ENCODE measurements at regions of chr5 and their contacts with region 1.

Region 1: GRCh38 chr5:99060306-99061261 is 131.8 kb upstream of the CHD1 start:
- DNase-seq: peak; percentile 78 to 92 (median 87)
- ATAC-seq: peak; percentile 78
- H3K4me3 ChIP-seq: no peak overlapping the region
- H3K4me3 Mint-ChIP-seq: peak overlapping the region; percentile 23
- H3K27ac ChIP-seq: no peak overlapping the region
- H3K27ac Mint-ChIP-seq: no peak overlapping the region
- H3K4me1 ChIP-seq: no peaks in the 10 kb centered on the region
- H3K4me1 Mint-ChIP-seq: peaks cover 15% of the 10 kb centered on the region
- H3K27me3 ChIP-seq: no peaks in the 10 kb centered on the region
- H3K27me3 Mint-ChIP-seq: peaks cover 7% of the 10 kb centered on the region
- CTCF ChIP-seq: peak; percentile 92

Region 2: DNA sequence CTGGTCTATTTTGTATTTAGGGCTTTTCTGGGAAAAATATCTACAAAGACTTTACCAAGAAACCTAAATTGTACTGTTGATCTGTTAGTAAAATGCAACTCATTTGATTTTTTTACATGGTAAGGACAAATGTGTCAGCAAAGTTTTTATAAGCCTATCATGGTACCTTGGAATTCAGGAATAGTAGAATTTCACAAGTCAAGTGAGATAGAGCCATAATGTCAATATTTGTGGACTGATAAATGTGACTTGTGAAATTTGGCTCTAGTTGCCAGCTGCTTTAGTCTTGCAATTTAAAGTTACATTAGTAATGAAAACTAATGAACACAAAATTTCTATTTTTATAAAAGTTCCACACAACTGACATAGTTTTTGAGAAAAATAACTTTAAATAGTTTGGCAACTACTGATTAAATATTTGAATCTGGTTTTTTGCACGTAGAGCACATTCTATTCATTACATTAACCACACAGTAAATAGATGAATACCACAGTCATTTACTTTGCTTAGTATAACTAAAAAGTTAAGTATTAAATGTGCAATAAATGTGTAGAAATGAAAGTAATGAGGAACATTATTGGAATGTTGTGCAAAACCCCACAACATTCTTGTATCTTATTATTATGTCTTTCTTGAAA is 1836.4 kb before region 1 on chr5:
- CTCF ChIA-PET with region 1: no interaction called
- POLR2A ChIA-PET with region 1: no interaction called
- intact Hi-C with region 1: loop called in 1 of 2 experiments (anchors 10 kb)
- DNase-seq: no peak
- ATAC-seq: no peak
- H3K4me3 ChIP-seq: no peak overlapping the region
- H3K4me3 Mint-ChIP-seq: no peak overlapping the region
- H3K27ac ChIP-seq: no peak overlapping the region
- H3K27ac Mint-ChIP-seq: no peak overlapping the region
- H3K4me1 ChIP-seq: no peaks in the 10 kb centered on the region
- H3K4me1 Mint-ChIP-seq: no peaks in the 10 kb centered on the region
- H3K27me3 ChIP-seq: no peaks in the 10 kb centered on the region
- H3K27me3 Mint-ChIP-seq: no peaks in the 10 kb centered on the region
- CTCF ChIP-seq: no peak

Region 3: GRCh38 chr5:98773464-98774191 is 287.0 kb before region 1 on chr5 and contains the start of gene RGMB:
- CTCF ChIA-PET with region 1: no interaction called
- POLR2A ChIA-PET with region 1: no interaction called
- intact Hi-C with region 1: no loop called
- DNase-seq: peak; percentile 79 to 94 (median 88)
- ATAC-seq: peak; percentile 85
- H3K4me3 ChIP-seq: peak within 1 kb of the TSS; percentile 74
- H3K4me3 Mint-ChIP-seq: peak within 1 kb of the TSS; percentile 99
- H3K27ac ChIP-seq: peak within 1 kb of the TSS; percentile 10 to 61
- H3K27ac Mint-ChIP-seq: peak within 1 kb of the TSS; percentile 87
- H3K4me1 ChIP-seq: peaks cover 45% of the 10 kb centered on the region
- H3K4me1 Mint-ChIP-seq: peaks cover 72% of the 10 kb centered on the region
- H3K27me3 ChIP-seq: peaks cover 0 to 12% of the 10 kb centered on the region in 2 experiments
- H3K27me3 Mint-ChIP-seq: peaks cover 14% of the 10 kb centered on the region
- CTCF ChIP-seq: no peak
- total RNA-seq, gene RGMB: 15.8 to 15.9 TPM

Region 4: DNA sequence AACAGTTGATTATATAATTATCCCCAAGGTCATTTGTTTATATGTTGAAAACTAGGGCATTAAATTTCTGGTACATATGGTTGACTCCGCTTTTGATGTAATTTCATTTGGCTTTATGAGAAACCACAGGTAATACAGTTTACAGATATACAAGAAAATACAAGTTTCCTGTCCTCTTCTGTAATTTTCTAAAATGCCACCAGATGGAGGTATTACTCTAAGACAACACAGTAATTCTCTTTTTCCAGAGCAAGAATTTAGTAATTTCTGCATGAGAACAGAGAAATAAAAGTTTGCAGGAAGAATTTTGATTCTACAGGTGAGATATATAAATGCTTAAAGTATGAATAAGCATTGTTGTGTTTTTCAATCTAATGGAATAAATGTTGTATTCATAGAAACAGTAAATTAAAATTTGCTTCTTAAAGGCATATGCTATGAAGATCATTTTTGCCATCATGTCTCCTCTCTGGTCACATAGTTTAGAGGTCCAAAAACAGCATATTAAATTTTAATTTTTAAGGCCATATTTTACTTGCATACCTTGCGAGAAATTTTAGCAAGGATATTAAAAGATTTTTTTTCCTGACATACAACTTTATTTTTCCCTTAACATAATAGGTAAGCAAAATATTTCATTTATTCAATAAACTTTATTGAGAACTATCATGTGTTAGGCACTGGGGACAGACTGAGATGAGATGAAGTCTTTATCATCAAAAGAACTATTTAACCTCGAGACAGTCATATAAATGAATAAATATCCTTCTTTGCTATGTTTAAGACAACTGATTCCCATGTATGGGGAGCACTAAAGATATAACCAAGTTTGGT is 154.5 kb before region 1 on chr5:
- CTCF ChIA-PET with region 1: interaction called, 29 read pairs
- POLR2A ChIA-PET with region 1: interaction called, 6 read pairs
- intact Hi-C with region 1: loop called (anchors 1 kb)
- DNase-seq: peak in 3 of 14 experiments; percentile 74 to 76 (median 75)
- ATAC-seq: peak; percentile 68
- H3K4me3 ChIP-seq: no peak overlapping the region
- H3K4me3 Mint-ChIP-seq: no peak overlapping the region
- H3K27ac ChIP-seq: no peak overlapping the region
- H3K27ac Mint-ChIP-seq: peak overlapping the region; percentile 13
- H3K4me1 ChIP-seq: peaks cover 2% of the 10 kb centered on the region
- H3K4me1 Mint-ChIP-seq: peaks cover 46% of the 10 kb centered on the region
- H3K27me3 ChIP-seq: no peaks in the 10 kb centered on the region
- H3K27me3 Mint-ChIP-seq: no peaks in the 10 kb centered on the region
- CTCF ChIP-seq: peak; percentile 88

Region 5: GRCh38 chr5:98975682-98976407 is 84.7 kb before region 1 on chr5:
- CTCF ChIA-PET with region 1: no interaction called
- POLR2A ChIA-PET with region 1: no interaction called
- intact Hi-C with region 1: loop called in 1 of 2 experiments (anchors 5 kb)
- DNase-seq: peak in 1 of 14 experiments; percentile 14
- ATAC-seq: no peak
- H3K4me3 ChIP-seq: no peak overlapping the region
- H3K4me3 Mint-ChIP-seq: no peak overlapping the region
- H3K27ac ChIP-seq: no peak overlapping the region
- H3K27ac Mint-ChIP-seq: no peak overlapping the region
- H3K4me1 ChIP-seq: peaks cover 7% of the 10 kb centered on the region
- H3K4me1 Mint-ChIP-seq: peaks cover 26% of the 10 kb centered on the region
- H3K27me3 ChIP-seq: no peaks in the 10 kb centered on the region
- H3K27me3 Mint-ChIP-seq: no peaks in the 10 kb centered on the region
- CTCF ChIP-seq: no peak

Region 6: GRCh38 chr5:99037668-99038067 is 22.9 kb before region 1 on chr5:
- CTCF ChIA-PET with region 1: interaction called, 4 read pairs
- POLR2A ChIA-PET with region 1: interaction called, 5 read pairs
- intact Hi-C with region 1: loop called in 1 of 2 experiments (anchors 2 kb)
- DNase-seq: peak; percentile 48 to 89 (median 67)
- ATAC-seq: peak; percentile 77
- H3K4me3 ChIP-seq: no peak overlapping the region
- H3K4me3 Mint-ChIP-seq: peak overlapping the region; percentile 79
- H3K27ac ChIP-seq: peak overlapping the region; percentile 35 to 45
- H3K27ac Mint-ChIP-seq: peak overlapping the region; percentile 93
- H3K4me1 ChIP-seq: peaks cover 26% of the 10 kb centered on the region
- H3K4me1 Mint-ChIP-seq: peaks cover 71% of the 10 kb centered on the region
- H3K27me3 ChIP-seq: no peaks in the 10 kb centered on the region
- H3K27me3 Mint-ChIP-seq: no peaks in the 10 kb centered on the region
- CTCF ChIP-seq: no peak

Measured in CD4-positive, alpha-beta T cell (primary cell).